Activated T-helper 2 cell treated with anti-CD3 and anti-CD28 coated beads, Interferon-gamma antibody, Interleukin-2, Interleukin-4, amounts not matched to agents 10 μg/mL and 5 μg/mL and 100 μg/mL, durations not matched to agents 14 hours and 24 hours and 36 hours (primary cell): ENCODE measurements at regions of chr1 and their contacts with region 1.

Region 1: GRCh38 chr1:150110116-150110515 is 39.6 kb upstream of the PLEKHO1 start:
- DNase-seq: no peak
- H3K4me3 Mint-ChIP-seq: peak overlapping the region; percentile 51
- H3K27ac Mint-ChIP-seq: peak overlapping the region; percentile 87
- H3K4me1 Mint-ChIP-seq: peaks cover 63% of the 10 kb centered on the region
- H3K27me3 Mint-ChIP-seq: no peaks in the 10 kb centered on the region

Region 2: DNA sequence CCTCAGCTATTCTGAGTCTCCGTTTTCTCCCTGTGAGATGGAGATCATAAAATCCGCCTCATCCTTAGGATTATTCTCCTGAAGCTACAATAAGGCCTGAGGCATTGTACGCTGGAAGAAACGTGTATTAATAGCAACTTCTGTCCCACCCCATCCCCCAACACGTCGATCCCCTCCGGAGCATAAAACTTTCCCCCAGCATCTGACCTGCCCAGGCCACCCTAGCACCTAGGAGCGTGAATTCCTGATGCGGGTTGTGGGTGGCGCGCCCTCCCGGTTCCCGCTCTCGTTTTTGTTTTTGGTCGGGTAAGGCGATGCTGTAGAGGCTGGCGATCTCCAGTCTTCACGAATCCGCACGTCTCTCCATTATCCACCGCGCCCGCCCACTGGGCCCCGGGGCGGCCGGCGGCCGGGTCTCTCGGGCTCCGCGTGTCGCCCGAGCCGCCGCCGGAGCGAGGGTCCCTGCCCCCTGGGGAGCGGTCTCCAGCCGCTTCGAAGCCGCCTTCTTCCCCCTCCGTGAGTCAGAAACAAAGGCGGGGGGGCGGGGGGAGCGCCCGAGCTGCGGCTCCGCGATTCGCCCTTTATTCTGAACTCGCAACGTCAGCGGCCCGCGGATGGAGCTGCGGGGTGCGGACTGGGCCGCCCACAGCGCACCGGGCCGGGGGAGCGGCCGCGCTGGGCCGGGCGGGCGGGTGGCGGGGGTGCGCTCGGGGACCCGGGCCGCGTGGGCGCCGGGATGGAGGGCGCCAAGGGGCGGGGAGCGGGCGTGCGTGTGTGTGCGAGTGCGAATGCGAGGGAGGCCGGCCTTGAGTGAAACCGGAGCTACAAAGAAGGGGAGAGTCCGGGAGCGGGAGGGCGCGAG is 39.4 kb after region 1 on chr1 and contains the start of gene PLEKHO1:
- intact Hi-C with region 1: loop called (anchors 2 kb)
- DNase-seq: peak; percentile 64
- H3K4me3 Mint-ChIP-seq: peak within 1 kb of the TSS; percentile 88
- H3K27ac Mint-ChIP-seq: peak within 1 kb of the TSS; percentile 83
- H3K4me1 Mint-ChIP-seq: peaks cover 51% of the 10 kb centered on the region
- H3K27me3 Mint-ChIP-seq: peaks cover 23% of the 10 kb centered on the region
- total RNA-seq, gene PLEKHO1: 29.3 and 31.2 TPM in 2 replicates

Region 3: GRCh38 chr1:150159550-150159949 is 49.4 kb after region 1 on chr1:
- intact Hi-C with region 1: no loop called
- DNase-seq: no peak
- H3K4me3 Mint-ChIP-seq: no peak overlapping the region
- H3K27ac Mint-ChIP-seq: no peak overlapping the region
- H3K4me1 Mint-ChIP-seq: peaks cover 51% of the 10 kb centered on the region
- H3K27me3 Mint-ChIP-seq: no peaks in the 10 kb centered on the region